ENCODE measurements at regions of chr12 and their contacts with region 1.

Region 1: GRCh38 chr12:107093417-107094182 is at the start of gene CRY1:
- DNase-seq: peak; percentile 94
- ATAC-seq: peak; percentile 89
- H3K4me3 Mint-ChIP-seq: no peak within 1 kb of the TSS
- H3K27ac Mint-ChIP-seq: no peak within 1 kb of the TSS
- H3K4me1 Mint-ChIP-seq: peaks cover 5% of the 10 kb centered on the region
- H3K27me3 Mint-ChIP-seq: peaks cover 9% of the 10 kb centered on the region
- total RNA-seq, gene CRY1: 13.5 to 15.7 TPM

Region 2: DNA sequence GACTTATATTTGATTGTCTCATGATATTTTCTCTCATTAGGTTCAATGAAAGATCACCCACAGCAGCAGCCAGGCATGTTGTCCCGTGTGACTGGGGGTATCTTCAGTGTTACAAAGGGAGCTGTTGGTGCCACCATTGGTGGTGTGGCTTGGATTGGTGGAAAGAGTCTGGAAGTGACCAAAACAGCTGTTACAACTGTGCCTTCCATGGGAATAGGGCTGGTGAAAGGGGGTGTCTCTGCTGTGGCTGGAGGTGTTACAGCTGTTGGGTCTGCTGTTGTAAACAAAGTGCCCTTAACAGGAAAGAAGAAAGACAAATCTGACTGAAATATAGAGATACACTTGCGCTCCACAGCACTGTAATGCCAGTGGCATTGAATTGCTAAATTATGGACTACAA is 122.5 kb before region 1 on chr12:
- CTCF ChIA-PET with region 1: no interaction called
- POLR2A ChIA-PET with region 1: no interaction called
- DNase-seq: no peak
- ATAC-seq: no peak
- H3K4me3 Mint-ChIP-seq: no peak overlapping the region
- H3K27ac Mint-ChIP-seq: no peak overlapping the region
- H3K4me1 Mint-ChIP-seq: peaks cover 2% of the 10 kb centered on the region
- H3K27me3 Mint-ChIP-seq: no peaks in the 10 kb centered on the region

Region 3: GRCh38 chr12:107079172-107080011 is 14.2 kb before region 1 on chr12:
- CTCF ChIA-PET with region 1: interaction called, 15 read pairs
- POLR2A ChIA-PET with region 1: interaction called, 3 read pairs
- DNase-seq: no peak
- ATAC-seq: no peak
- H3K4me3 Mint-ChIP-seq: no peak overlapping the region
- H3K27ac Mint-ChIP-seq: no peak overlapping the region
- H3K4me1 Mint-ChIP-seq: no peaks in the 10 kb centered on the region
- H3K27me3 Mint-ChIP-seq: peaks cover 2% of the 10 kb centered on the region

Region 4: DNA sequence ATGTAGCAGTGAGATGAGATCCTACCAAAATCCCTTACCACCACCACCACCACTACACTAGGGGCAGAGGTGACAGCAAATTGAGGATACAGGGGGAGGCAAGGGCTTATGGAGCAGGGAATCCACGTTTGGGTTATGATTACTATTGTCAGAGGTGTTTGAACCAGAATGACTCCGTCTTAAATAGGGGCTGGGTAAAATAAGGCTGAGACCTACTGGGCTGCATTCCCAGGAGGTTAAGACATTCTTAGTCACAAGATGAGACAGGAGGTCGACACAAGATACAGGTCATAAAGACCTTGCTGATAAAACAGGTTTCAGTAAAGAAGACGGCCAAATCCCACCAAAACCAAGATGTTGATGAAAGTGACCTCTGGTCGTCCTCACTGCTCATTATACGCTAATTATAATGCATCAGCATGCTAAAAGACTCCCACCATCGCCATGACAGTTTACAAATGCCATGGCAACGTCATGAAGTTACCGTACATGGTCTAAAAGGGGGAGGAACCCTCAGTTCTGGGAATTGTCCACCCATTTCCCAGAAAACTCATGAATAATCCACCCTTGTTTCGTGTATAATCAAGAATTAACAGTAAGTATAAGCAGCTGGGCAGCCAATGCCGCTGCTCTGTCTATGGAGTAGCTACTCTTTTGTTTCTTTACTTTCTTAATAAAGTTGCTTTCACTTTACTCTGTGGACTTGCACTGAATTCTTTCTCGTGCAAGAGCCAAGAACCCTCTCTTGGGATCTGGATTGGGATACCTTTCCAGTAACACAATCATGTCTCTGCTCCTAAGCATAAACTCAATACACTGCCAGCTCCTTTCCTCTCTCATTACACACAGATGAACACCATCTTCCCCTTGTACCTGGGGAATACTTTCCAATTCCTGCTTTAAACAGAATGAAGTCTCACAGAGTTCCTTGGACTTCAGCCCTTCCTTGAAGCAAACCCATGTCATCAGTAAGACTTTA is 16.4 kb after region 1 on chr12:
- CTCF ChIA-PET with region 1: interaction called, 65 read pairs
- POLR2A ChIA-PET with region 1: interaction called, 3 read pairs
- DNase-seq: no peak
- ATAC-seq: no peak
- H3K4me3 Mint-ChIP-seq: no peak overlapping the region
- H3K27ac Mint-ChIP-seq: no peak overlapping the region
- H3K4me1 Mint-ChIP-seq: no peaks in the 10 kb centered on the region
- H3K27me3 Mint-ChIP-seq: peaks cover 33% of the 10 kb centered on the region

Region 5: GRCh38 chr12:107122452-107122958 is 28.9 kb after region 1 on chr12:
- CTCF ChIA-PET with region 1: no interaction called
- POLR2A ChIA-PET with region 1: no interaction called
- DNase-seq: no peak
- ATAC-seq: no peak
- H3K4me3 Mint-ChIP-seq: no peak overlapping the region
- H3K27ac Mint-ChIP-seq: no peak overlapping the region
- H3K4me1 Mint-ChIP-seq: no peaks in the 10 kb centered on the region
- H3K27me3 Mint-ChIP-seq: peaks cover 35% of the 10 kb centered on the region